ENCODE measurements at regions of chr22 and their contacts with region 1.

Region 1: DNA sequence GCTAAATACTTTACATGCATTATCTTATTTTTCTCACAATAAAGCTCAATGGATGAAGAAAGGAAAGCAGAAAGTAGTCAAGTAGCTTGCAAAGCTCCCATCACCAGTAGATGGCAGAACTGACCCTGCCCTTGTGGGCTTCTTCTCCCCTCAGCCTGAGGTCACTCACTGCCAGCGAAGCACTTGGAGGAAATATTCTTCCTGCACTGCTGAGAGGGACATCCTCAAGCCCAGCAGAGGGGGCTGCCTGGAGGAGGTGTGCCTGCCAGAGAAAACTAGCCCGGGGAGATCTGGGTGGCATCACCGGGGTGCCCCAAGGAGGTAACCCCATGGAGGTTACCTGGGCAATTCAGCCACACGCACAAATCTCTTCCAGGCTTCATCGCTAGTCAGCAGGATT is 6.6 kb downstream of the APOL4 start:
- DNase-seq: peak; percentile 38
- H3K4me3 ChIP-seq: no peak overlapping the region
- H3K27ac ChIP-seq: no peak overlapping the region
- H3K4me1 ChIP-seq: peaks cover 63% of the 10 kb centered on the region
- H3K27me3 ChIP-seq: no peaks in the 10 kb centered on the region
- CTCF ChIP-seq: peak; percentile 84

Region 2: GRCh38 chr22:36277482-36278291 is 82.7 kb after region 1 on chr22:
- intact Hi-C with region 1: loop called (anchors 10 kb)
- DNase-seq: peak; percentile 61
- H3K4me3 ChIP-seq: peak overlapping the region; percentile 24
- H3K27ac ChIP-seq: peak overlapping the region; percentile 43
- H3K4me1 ChIP-seq: peaks cover 22% of the 10 kb centered on the region
- H3K27me3 ChIP-seq: no peaks in the 10 kb centered on the region
- CTCF ChIP-seq: peak; percentile 89

Region 3: GRCh38 chr22:36481393-36482168 is 286.6 kb after region 1 on chr22 and contains the start of gene TXN2:
- intact Hi-C with region 1: loop called (anchors 10 kb)
- DNase-seq: peak; percentile 98
- H3K4me3 ChIP-seq: peak within 1 kb of the TSS; percentile 92
- H3K27ac ChIP-seq: peak within 1 kb of the TSS; percentile 99
- H3K4me1 ChIP-seq: peaks cover 27% of the 10 kb centered on the region
- H3K27me3 ChIP-seq: no peaks in the 10 kb centered on the region
- CTCF ChIP-seq: no peak
- total RNA-seq, gene TXN2: 113 TPM